AG04449 (cell line): ENCODE measurements at regions of chr3 and their contacts with region 1.

Region 1: GRCh38 chr3:143674100-143674968 is 173.9 kb downstream of the SLC9A9 start:
- DNase-seq: peak; percentile 10
- H3K4me3 ChIP-seq: no peak overlapping the region
- CTCF ChIP-seq: peak; percentile 83

Region 2: GRCh38 chr3:143124601-143125520 is 549.5 kb before region 1 on chr3:
- CTCF ChIA-PET with region 1: interaction called, 10 read pairs
- POLR2A ChIA-PET with region 1: no interaction called
- DNase-seq: no peak
- H3K4me3 ChIP-seq: no peak overlapping the region
- CTCF ChIP-seq: no peak

Region 3: GRCh38 chr3:143654906-143655305 is 19.4 kb before region 1 on chr3:
- CTCF ChIA-PET with region 1: interaction called, 13 read pairs
- POLR2A ChIA-PET with region 1: no interaction called
- DNase-seq: no peak
- H3K4me3 ChIP-seq: no peak overlapping the region
- CTCF ChIP-seq: no peak

Region 4: DNA sequence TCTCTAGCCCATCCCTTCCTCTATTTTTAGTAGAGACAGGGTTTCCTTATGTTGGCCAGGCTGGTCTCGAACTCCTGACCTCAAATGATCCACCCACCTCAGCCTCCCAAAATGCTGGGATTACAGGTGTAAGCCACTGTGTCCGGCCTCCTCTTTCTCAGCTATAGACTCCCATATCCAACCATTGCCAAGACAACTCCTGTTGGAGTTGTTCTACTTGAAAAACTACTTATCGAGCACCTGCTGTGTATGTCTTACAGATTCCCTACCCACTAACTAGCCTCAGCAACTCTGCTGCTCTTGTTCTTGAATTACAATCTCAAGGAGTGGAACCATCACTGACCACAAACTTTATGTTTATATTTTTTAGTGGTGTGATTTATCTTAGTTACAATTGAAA is 12.7 kb before region 1 on chr3:
- CTCF ChIA-PET with region 1: interaction called, 13 read pairs
- POLR2A ChIA-PET with region 1: no interaction called
- DNase-seq: no peak
- H3K4me3 ChIP-seq: no peak overlapping the region
- CTCF ChIP-seq: no peak

Region 5: GRCh38 chr3:143865302-143865701 is 191.0 kb after region 1 on chr3:
- CTCF ChIA-PET with region 1: no interaction called
- POLR2A ChIA-PET with region 1: no interaction called
- DNase-seq: no peak
- H3K4me3 ChIP-seq: no peak overlapping the region
- CTCF ChIP-seq: no peak